ENCODE measurements at regions of chr6 and their contacts with region 1.

Region 1: GRCh38 chr6:16438718-16439591 is 200.6 kb downstream of the GMPR start:
- DNase-seq: peak in 2 of 9 experiments; percentile 52 to 65
- ATAC-seq: no peak
- H3K4me3 ChIP-seq: no peak overlapping the region
- H3K4me3 Mint-ChIP-seq: no peak overlapping the region
- H3K27ac ChIP-seq: peak overlapping the region in 1 of 2 experiments; percentile 67
- H3K27ac Mint-ChIP-seq: peak overlapping the region; percentile 47
- H3K4me1 ChIP-seq: peaks cover 28% of the 10 kb centered on the region
- H3K4me1 Mint-ChIP-seq: peaks cover 52% of the 10 kb centered on the region
- H3K27me3 ChIP-seq: no peaks in the 10 kb centered on the region
- H3K27me3 Mint-ChIP-seq: no peaks in the 10 kb centered on the region
- CTCF ChIP-seq: no peak

Region 2: DNA sequence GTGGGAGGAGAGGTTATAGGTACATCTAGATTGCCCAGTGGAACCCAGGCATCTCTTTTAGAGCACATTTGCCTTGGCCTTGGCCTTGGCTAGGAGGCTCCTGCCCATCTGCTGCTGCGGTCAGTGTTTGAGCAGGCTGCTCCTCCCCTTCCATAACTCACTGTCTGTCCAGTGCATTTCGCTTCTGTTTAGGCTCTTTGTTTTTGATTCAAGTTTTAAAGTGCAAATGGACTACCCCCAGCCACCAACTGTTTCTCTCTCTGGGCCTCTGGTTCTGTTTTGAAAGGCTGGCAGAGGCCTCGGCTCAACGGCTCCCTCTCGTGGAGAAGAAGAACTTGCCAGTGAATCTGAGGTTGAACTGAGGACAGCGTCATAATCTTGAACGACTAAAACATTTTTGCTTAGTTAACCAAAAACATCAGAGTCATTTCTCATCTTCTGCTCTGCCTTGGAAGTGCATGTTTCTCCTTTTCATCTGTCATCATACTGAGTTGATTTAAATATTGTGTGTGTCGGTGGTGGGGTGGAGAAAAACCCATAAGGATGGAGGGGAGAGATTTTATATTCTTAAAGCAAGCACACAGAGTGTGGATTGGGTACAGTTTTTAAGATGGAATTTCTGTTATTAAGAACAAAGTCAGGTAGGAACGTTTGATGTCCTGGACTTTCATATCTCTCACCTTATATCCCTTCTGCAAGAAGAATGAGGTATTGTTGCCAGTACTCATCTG is 947.5 kb before region 1 on chr6:
- CTCF ChIA-PET with region 1: no interaction called
- POLR2A ChIA-PET with region 1: no interaction called
- intact Hi-C with region 1: no loop called
- DNase-seq: peak; percentile 49 to 80 (median 68)
- ATAC-seq: peak; percentile 89
- H3K4me3 ChIP-seq: no peak overlapping the region
- H3K4me3 Mint-ChIP-seq: no peak overlapping the region
- H3K27ac ChIP-seq: no peak overlapping the region
- H3K27ac Mint-ChIP-seq: peak overlapping the region; percentile 2
- H3K4me1 ChIP-seq: peaks cover 12% of the 10 kb centered on the region
- H3K4me1 Mint-ChIP-seq: peaks cover 40% of the 10 kb centered on the region
- H3K27me3 ChIP-seq: no peaks in the 10 kb centered on the region
- H3K27me3 Mint-ChIP-seq: no peaks in the 10 kb centered on the region
- CTCF ChIP-seq: peak; percentile 92

Region 3: GRCh38 chr6:16471222-16471909 is 32.4 kb after region 1 on chr6:
- CTCF ChIA-PET with region 1: no interaction called
- POLR2A ChIA-PET with region 1: interaction called, 3 read pairs
- intact Hi-C with region 1: loop called in 1 of 2 experiments (anchors 2 kb)
- DNase-seq: peak in 3 of 9 experiments; percentile 33 to 59 (median 35)
- ATAC-seq: no peak
- H3K4me3 ChIP-seq: no peak overlapping the region
- H3K4me3 Mint-ChIP-seq: no peak overlapping the region
- H3K27ac ChIP-seq: no peak overlapping the region
- H3K27ac Mint-ChIP-seq: peak overlapping the region; percentile 69
- H3K4me1 ChIP-seq: peaks cover 22% of the 10 kb centered on the region
- H3K4me1 Mint-ChIP-seq: peaks cover 55% of the 10 kb centered on the region
- H3K27me3 ChIP-seq: no peaks in the 10 kb centered on the region
- H3K27me3 Mint-ChIP-seq: no peaks in the 10 kb centered on the region
- CTCF ChIP-seq: no peak

Region 4: DNA sequence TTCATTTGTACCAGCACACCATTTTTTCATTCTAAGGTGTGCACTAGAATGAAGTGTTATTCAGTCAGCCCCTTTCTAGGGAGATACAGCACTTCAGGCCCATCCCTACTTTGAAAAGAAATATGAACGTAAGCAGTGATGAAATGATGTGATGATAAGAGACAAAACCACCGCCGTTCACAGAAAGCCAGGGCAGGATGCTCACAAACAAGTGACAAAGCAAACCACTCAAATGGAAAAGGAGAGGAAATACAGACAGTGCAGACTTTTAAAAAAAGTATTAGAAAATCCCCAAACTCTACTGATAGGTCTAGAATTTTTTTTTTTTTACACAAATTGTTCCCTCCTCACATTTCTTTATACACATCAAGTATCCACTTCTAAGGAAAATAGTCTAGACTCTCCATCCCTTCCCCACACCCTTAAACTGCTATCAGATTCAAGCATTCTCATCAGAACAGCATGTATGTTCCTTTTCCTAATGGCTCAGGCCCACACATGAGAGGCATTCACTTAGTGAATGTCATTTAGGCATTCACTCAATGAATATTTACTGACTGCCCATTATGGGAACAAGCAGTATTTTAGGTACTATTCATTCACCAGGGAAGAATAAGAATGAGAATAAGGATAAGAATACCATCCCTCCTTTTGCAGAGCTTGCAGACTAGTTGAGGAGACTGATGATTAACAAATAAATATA is 42.9 kb after region 1 on chr6:
- CTCF ChIA-PET with region 1: no interaction called
- POLR2A ChIA-PET with region 1: no interaction called
- intact Hi-C with region 1: loop called in 1 of 2 experiments (anchors 5 kb)
- DNase-seq: peak; percentile 30 to 95 (median 61)
- ATAC-seq: peak; percentile 81
- H3K4me3 ChIP-seq: no peak overlapping the region
- H3K4me3 Mint-ChIP-seq: peak overlapping the region; percentile 52
- H3K27ac ChIP-seq: peak overlapping the region; percentile 28 to 83
- H3K27ac Mint-ChIP-seq: peak overlapping the region; percentile 95
- H3K4me1 ChIP-seq: peaks cover 61% of the 10 kb centered on the region
- H3K4me1 Mint-ChIP-seq: peaks cover 77% of the 10 kb centered on the region
- H3K27me3 ChIP-seq: no peaks in the 10 kb centered on the region
- H3K27me3 Mint-ChIP-seq: no peaks in the 10 kb centered on the region
- CTCF ChIP-seq: no peak

Measured in CD8-positive, alpha-beta T cell (primary cell).